ENCODE measurements at regions of chr3 and their contacts with region 1.

Region 1: GRCh38 chr3:122661633-122662032 is 19.0 kb upstream of the PARP14 start:
- DNase-seq: peak; percentile 77
- H3K4me3 Mint-ChIP-seq: no peak overlapping the region
- H3K27ac Mint-ChIP-seq: no peak overlapping the region
- H3K4me1 Mint-ChIP-seq: peaks cover 14% of the 10 kb centered on the region
- H3K27me3 Mint-ChIP-seq: peaks cover 4% of the 10 kb centered on the region

Region 2: GRCh38 chr3:122646146-122646988 is 15.3 kb before region 1 on chr3:
- CTCF ChIA-PET with region 1: interaction called, 3 read pairs
- POLR2A ChIA-PET with region 1: no interaction called
- intact Hi-C with region 1: loop called (anchors 2 kb)
- DNase-seq: peak; percentile 31
- H3K4me3 Mint-ChIP-seq: peak overlapping the region; percentile 6
- H3K27ac Mint-ChIP-seq: peak overlapping the region; percentile 65
- H3K4me1 Mint-ChIP-seq: peaks cover 35% of the 10 kb centered on the region
- H3K27me3 Mint-ChIP-seq: no peaks in the 10 kb centered on the region